ENCODE measurements at regions of chr7 and their contacts with region 1.

Region 1: DNA sequence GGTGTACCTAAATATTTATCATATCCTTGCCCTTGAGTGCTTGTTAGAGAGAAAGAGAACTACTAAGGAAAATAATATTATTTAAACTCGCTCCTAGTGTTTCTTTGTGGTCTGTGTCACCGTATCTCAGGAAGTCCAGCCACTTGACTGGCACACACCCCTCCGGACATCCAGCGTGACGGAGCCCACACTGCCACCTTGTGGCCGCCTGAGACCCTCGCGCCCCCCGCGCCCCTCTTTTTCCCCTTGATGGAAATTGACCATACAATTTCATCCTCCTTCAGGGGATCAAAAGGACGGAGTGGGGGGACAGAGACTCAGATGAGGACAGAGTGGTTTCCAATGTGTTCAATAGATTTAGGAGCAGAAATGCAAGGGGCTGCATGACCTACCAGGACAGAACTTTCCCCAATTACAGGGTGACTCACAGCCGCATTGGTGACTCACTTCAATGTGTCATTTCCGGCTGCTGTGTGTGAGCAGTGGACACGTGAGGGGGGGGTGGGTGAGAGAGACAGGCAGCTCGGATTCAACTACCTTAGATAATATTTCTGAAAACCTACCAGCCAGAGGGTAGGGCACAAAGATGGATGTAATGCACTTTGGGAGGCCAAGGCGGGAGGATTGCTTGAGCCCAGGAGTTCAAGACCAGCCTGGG is 11.4 kb downstream of the SERPINE1 start:
- DNase-seq: peak; percentile 62
- ATAC-seq: peak; percentile 73
- H3K4me3 Mint-ChIP-seq: peak overlapping the region; percentile 46
- H3K27ac Mint-ChIP-seq: no peak overlapping the region
- H3K4me1 Mint-ChIP-seq: peaks cover 52% of the 10 kb centered on the region
- H3K27me3 Mint-ChIP-seq: peaks cover 3% of the 10 kb centered on the region; the same call in 1 of the 2 replicates
- CTCF ChIP-seq: peak; percentile 59

Region 2: DNA sequence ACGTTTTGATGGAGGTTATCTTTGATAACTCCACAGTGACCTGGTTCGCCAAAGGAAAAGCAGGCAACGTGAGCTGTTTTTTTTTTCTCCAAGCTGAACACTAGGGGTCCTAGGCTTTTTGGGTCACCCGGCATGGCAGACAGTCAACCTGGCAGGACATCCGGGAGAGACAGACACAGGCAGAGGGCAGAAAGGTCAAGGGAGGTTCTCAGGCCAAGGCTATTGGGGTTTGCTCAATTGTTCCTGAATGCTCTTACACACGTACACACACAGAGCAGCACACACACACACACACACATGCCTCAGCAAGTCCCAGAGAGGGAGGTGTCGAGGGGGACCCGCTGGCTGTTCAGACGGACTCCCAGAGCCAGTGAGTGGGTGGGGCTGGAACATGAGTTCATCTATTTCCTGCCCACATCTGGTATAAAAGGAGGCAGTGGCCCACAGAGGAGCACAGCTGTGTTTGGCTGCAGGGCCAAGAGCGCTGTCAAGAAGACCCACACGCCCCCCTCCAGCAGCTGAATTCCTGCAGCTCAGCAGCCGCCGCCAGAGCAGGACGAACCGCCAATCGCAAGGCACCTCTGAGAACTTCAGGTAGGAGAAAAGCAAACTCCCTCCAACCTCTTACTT is 11.6 kb before region 1 on chr7 and contains the start of gene SERPINE1:
- CTCF ChIA-PET with region 1: interaction called, 42 read pairs
- POLR2A ChIA-PET with region 1: no interaction called
- DNase-seq: peak; percentile 61
- ATAC-seq: peak; percentile 83
- H3K4me3 Mint-ChIP-seq: peak within 1 kb of the TSS; percentile 32
- H3K27ac Mint-ChIP-seq: no peak within 1 kb of the TSS
- H3K4me1 Mint-ChIP-seq: peaks cover 41% of the 10 kb centered on the region
- H3K27me3 Mint-ChIP-seq: peaks cover 17% of the 10 kb centered on the region
- CTCF ChIP-seq: no peak
- total RNA-seq, gene SERPINE1: 1.1 to 2.6 TPM (median 2.2 TPM) in 3 replicates

Region 3: DNA sequence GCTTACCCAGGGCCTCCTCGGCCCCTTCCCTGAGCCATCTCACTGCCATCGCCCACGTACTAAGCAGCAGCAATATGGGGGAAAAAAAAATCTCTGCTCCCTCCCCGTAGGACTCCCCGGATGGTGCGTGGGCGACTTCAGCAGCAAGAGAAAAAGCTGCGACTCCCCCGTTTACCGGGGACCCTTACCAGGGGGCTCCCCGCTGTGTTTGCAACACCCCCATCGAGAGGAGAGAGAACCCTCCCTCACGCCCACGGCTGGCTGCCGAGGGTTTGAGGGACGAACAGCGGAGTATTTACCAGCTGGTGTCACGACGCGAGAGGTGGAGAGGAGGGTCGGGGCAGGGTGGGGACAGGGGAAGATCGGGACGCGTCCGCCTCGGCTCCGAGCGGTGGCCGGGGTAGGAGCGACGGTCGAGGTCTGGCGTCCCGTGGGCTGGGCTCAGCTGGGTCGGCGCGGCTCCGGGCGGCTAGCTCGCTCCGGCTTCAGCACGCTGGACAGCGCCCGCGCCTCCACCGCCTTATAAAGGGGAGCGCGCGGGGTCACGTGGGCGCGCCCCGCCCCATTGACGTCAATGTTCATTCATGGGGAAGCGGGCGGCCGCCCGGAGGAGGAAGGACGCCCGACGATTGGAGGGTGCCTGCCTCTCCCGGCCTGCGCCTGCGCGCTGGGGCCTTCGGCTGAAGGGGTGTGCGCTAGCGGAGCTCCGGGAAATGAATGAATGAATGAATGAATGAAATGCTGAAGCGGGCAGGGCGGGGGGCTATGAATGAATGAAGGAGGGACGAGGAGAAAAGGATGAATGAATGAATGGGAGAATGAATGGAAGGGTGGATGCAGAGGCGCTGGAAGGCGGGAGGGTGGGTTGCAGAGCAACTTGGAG is 27.0 kb after region 1 on chr7 and contains the start of gene VGF:
- CTCF ChIA-PET with region 1: interaction called, 109 read pairs
- POLR2A ChIA-PET with region 1: interaction called, 5 read pairs
- DNase-seq: peak; percentile 98
- ATAC-seq: peak; percentile 46
- H3K4me3 Mint-ChIP-seq: peak within 1 kb of the TSS; percentile 81
- H3K27ac Mint-ChIP-seq: peak within 1 kb of the TSS; percentile 20; the same call in 1 of the 2 replicates
- H3K4me1 Mint-ChIP-seq: peaks cover 65% of the 10 kb centered on the region
- H3K27me3 Mint-ChIP-seq: peaks cover 67% of the 10 kb centered on the region
- CTCF ChIP-seq: no peak
- total RNA-seq, gene VGF: 5.2 to 6.4 TPM (median 5.6 TPM) in 3 replicates

Region 4: DNA sequence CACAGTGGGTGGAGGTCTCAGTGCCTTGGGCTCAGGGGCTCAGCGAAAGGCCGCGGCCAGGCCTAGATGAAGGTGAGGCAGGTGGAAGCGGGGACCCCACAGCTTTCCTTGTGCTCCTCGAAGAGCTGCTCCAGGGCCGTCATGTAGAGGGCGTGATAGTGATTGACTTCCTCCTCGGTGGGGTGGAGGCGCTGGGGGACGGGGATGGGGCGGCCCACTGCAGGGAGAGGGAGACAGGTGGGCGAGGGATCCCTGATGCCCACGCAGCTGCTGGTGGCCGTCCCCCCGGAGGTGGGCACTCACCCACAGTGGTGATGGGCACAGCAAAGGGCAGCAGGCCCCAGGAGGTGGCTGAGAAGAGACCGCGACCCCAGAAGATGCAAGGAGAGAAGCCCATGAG is 57.5 kb after region 1 on chr7:
- CTCF ChIA-PET with region 1: interaction called, 217 read pairs
- POLR2A ChIA-PET with region 1: no interaction called
- DNase-seq: no peak
- ATAC-seq: no peak
- H3K4me3 Mint-ChIP-seq: no peak overlapping the region
- H3K27ac Mint-ChIP-seq: no peak overlapping the region
- H3K4me1 Mint-ChIP-seq: peaks cover 13% of the 10 kb centered on the region
- H3K27me3 Mint-ChIP-seq: no peaks in the 10 kb centered on the region; the same call in 1 of the 2 replicates
- CTCF ChIP-seq: no peak

Region 5: DNA sequence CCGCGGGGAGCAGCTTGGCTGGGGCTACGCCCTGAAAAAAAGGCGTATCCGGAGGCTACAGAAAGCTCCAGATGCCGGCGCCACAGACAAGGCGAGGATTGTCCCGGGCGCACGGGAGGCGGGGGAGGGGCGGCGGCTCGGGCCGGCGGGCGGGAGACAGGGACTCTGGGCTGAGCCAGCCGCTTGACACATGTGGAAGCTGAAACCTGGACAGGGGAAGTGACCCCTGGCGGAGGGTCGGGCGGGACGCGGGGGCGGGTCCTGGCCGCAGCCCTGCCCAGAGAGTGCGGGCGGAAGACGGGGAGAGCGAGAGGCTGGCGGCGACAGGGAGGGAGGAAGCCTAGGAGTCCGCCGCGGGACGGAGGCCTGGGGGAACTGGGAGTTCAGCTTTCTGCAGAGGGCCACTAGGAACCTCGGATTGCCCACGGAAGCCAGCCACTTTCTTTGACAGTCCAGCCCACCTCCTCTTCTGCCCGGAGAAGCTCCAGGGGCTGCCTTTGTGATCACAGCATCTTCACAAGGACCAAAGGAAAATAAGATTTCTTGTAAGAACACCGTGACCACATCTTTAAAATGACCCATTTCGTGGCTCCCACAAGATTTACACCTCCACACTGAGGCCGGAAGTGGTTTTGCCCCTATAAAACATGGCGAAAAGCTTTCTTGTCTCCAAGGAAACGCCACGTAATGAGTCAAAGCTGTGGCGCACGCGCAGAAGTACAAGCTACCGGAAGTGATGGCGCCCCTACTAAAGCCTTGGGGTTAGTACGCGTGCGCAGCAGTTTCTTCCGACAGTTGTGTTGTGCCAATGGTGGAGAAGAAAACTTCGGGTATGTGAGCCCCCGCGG is 79.3 kb after region 1 on chr7 and contains the starts of genes PLOD3 and ZNHIT1:
- CTCF ChIA-PET with region 1: interaction called, 55 read pairs
- POLR2A ChIA-PET with region 1: no interaction called
- DNase-seq: peak; percentile 96
- ATAC-seq: peak; percentile 84
- H3K4me3 Mint-ChIP-seq: peak within 1 kb of the TSS; percentile 98
- H3K27ac Mint-ChIP-seq: peak within 1 kb of the TSS; percentile 90
- H3K4me1 Mint-ChIP-seq: peaks cover 27% of the 10 kb centered on the region
- H3K27me3 Mint-ChIP-seq: no peaks in the 10 kb centered on the region
- CTCF ChIP-seq: no peak
- total RNA-seq, gene PLOD3: 45.3 to 48.3 TPM (median 48.1 TPM) in 3 replicates
- total RNA-seq, gene ZNHIT1: 61.9 to 63.9 TPM (median 62.8 TPM) in 3 replicates

Region 6: DNA sequence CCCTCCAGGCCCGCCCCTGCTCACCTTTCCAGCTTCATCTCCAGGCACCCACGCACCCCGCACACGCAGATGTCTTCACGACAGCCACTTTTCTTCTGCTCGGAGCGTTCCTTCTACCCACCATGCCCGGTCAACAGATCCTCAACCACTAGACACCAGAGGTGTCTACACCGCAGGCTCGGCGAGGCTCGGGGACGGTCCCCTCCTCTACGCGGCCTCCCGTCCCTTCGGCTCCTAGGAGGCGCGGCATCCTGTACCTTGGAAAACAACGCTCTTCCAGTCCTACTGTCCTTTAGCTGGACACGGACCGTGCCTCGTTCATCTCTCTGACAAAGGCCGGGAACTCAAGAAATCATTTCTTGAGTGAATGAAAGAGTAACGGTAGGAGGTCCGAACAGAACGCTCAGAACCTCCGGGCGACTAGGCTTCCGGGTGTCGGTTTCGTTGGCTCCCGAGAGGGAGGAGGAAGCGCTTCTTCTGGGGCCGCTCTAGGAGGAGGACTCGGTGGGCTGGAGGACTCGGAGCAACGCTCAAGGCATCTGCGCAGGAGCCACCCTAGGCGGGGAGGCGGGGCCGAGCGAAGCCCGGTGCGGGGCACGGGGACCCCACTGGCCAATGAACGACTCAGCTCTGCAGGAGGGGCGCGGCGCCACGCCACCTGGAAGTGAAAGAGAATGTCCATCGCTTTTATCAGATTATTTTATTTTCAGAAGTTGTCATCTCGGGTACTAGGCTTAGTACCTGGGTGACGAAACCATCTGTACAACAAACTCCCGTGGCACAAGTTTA is 113.7 kb after region 1 on chr7:
- CTCF ChIA-PET with region 1: no interaction called
- POLR2A ChIA-PET with region 1: no interaction called
- DNase-seq: peak; percentile 99
- ATAC-seq: peak; percentile 100
- H3K4me3 Mint-ChIP-seq: peak overlapping the region; percentile 100
- H3K27ac Mint-ChIP-seq: peak overlapping the region; percentile 97
- H3K4me1 Mint-ChIP-seq: peaks cover 15% of the 10 kb centered on the region
- H3K27me3 Mint-ChIP-seq: no peaks in the 10 kb centered on the region; the same call in 1 of the 2 replicates
- CTCF ChIP-seq: no peak

Region 7: GRCh38 chr7:101278461-101279292 is 140.3 kb after region 1 on chr7:
- CTCF ChIA-PET with region 1: interaction called, 76 read pairs
- POLR2A ChIA-PET with region 1: no interaction called
- DNase-seq: no peak
- ATAC-seq: no peak
- H3K4me3 Mint-ChIP-seq: no peak overlapping the region
- H3K27ac Mint-ChIP-seq: no peak overlapping the region
- H3K4me1 Mint-ChIP-seq: peaks cover 4% of the 10 kb centered on the region
- H3K27me3 Mint-ChIP-seq: no peaks in the 10 kb centered on the region
- CTCF ChIP-seq: no peak

Measured in WTC11 (cell line).